CD8-positive, alpha-beta T cell (primary cell): ENCODE measurements at regions of chr12 and their contacts with region 1.

Region 1: DNA sequence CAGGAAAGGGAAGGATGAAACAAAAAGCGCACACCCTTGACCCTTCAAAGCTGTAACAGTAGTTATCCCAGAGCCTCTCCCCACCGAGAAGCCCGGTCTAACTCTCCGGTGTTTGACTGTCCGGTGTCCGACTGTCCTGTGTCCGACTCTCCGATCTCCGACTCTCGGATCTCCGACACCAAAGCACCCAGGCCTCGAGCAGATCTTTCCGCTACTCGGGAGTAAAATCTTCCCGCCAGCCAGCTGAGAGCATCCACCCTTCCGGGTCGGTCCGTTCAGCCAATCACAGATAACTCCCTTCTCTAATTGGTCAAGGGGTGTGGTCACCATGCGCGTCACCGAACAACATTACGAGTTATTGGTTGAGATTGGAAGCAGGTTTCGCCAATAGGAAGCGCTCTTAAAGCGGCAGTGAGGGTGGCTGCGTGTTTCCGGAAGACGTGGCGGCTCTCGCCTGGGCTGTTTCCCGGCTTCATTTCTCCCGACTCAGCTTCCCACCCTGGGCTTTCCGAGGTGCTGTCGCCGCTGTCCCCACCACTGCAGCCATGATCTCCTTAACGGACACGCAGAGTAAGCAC is at the starts of genes GOLT1B and RECQL:
- DNase-seq: peak; percentile 74 to 98 (median 88)
- ATAC-seq: peak; percentile 94
- H3K4me3 ChIP-seq: peak within 1 kb of the TSS; percentile 89 to 95
- H3K4me3 Mint-ChIP-seq: no peak within 1 kb of the TSS
- H3K27ac ChIP-seq: peak within 1 kb of the TSS; percentile 83 to 84
- H3K27ac Mint-ChIP-seq: no peak within 1 kb of the TSS
- H3K4me1 ChIP-seq: peaks cover 35% of the 10 kb centered on the region
- H3K4me1 Mint-ChIP-seq: peaks cover 60% of the 10 kb centered on the region
- H3K27me3 ChIP-seq: no peaks in the 10 kb centered on the region
- H3K27me3 Mint-ChIP-seq: no peaks in the 10 kb centered on the region
- CTCF ChIP-seq: no peak
- total RNA-seq, gene GOLT1B: 45.2 to 52.9 TPM
- total RNA-seq, gene RECQL: 9.9 to 14.6 TPM

Region 2: GRCh38 chr12:21764065-21764464 is 262.6 kb after region 1 on chr12:
- CTCF ChIA-PET with region 1: no interaction called
- POLR2A ChIA-PET with region 1: no interaction called
- intact Hi-C with region 1: no loop called
- DNase-seq: no peak
- ATAC-seq: no peak
- H3K4me3 ChIP-seq: no peak overlapping the region
- H3K4me3 Mint-ChIP-seq: no peak overlapping the region
- H3K27ac ChIP-seq: no peak overlapping the region
- H3K27ac Mint-ChIP-seq: no peak overlapping the region
- H3K4me1 ChIP-seq: no peaks in the 10 kb centered on the region
- H3K4me1 Mint-ChIP-seq: no peaks in the 10 kb centered on the region
- H3K27me3 ChIP-seq: no peaks in the 10 kb centered on the region
- H3K27me3 Mint-ChIP-seq: peaks cover 3% of the 10 kb centered on the region
- CTCF ChIP-seq: no peak

Region 3: GRCh38 chr12:22544038-22544979 is 1042.8 kb after region 1 on chr12 and contains the start of gene C2CD5:
- CTCF ChIA-PET with region 1: no interaction called
- POLR2A ChIA-PET with region 1: interaction called, 3 read pairs
- intact Hi-C with region 1: loop called in 1 of 2 experiments (anchors 5 kb)
- DNase-seq: peak; percentile 92 to 99 (median 95)
- ATAC-seq: peak; percentile 91
- H3K4me3 ChIP-seq: peak within 1 kb of the TSS; percentile 79 to 99
- H3K4me3 Mint-ChIP-seq: peak within 1 kb of the TSS; percentile 94
- H3K27ac ChIP-seq: peak within 1 kb of the TSS; percentile 92
- H3K27ac Mint-ChIP-seq: peak within 1 kb of the TSS; percentile 94
- H3K4me1 ChIP-seq: peaks cover 25% of the 10 kb centered on the region
- H3K4me1 Mint-ChIP-seq: peaks cover 38% of the 10 kb centered on the region
- H3K27me3 ChIP-seq: no peaks in the 10 kb centered on the region
- H3K27me3 Mint-ChIP-seq: no peaks in the 10 kb centered on the region
- CTCF ChIP-seq: peak; percentile 16
- total RNA-seq, gene C2CD5: 19.5 to 24.4 TPM